ENCODE measurements at regions of chr6 and their contacts with region 1.

Region 1: GRCh38 chr6:25017932-25018567 is 82.3 kb upstream of the RIPOR2 start:
- DNase-seq: peak; percentile 65 to 90 (median 84)
- ATAC-seq: peak; percentile 87
- H3K4me3 ChIP-seq: no peak overlapping the region
- H3K4me3 Mint-ChIP-seq: no peak overlapping the region
- H3K27ac ChIP-seq: peak overlapping the region in 1 of 2 experiments; percentile 59
- H3K27ac Mint-ChIP-seq: peak overlapping the region; percentile 87
- H3K4me1 ChIP-seq: peaks cover 31% of the 10 kb centered on the region
- H3K4me1 Mint-ChIP-seq: peaks cover 38% of the 10 kb centered on the region
- H3K27me3 ChIP-seq: no peaks in the 10 kb centered on the region
- H3K27me3 Mint-ChIP-seq: no peaks in the 10 kb centered on the region
- CTCF ChIP-seq: peak; percentile 89

Region 2: DNA sequence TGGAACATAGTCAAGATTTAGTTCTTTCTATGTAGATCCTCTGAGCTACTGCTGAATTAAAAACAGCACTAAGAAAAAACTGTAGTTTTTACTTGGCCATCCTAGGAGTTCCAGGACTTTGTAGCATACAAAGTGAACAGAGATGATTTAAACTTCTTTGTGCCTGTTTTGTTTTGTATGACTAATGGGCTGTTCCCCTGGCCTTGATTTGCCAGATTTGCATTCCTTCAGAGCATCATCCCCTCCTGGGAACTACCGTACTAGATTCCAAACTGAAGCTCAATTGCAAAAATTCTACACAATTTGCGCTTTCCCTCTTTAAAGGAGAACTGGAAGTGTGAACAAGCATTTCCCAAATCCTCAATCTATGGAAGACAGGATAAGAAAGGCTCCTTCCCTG is 328.1 kb before region 1 on chr6:
- CTCF ChIA-PET with region 1: interaction called, 3 read pairs
- POLR2A ChIA-PET with region 1: no interaction called
- intact Hi-C with region 1: loop called in 1 of 2 experiments (anchors 1 kb)
- DNase-seq: no peak
- ATAC-seq: no peak
- H3K4me3 ChIP-seq: no peak overlapping the region
- H3K4me3 Mint-ChIP-seq: no peak overlapping the region
- H3K27ac ChIP-seq: no peak overlapping the region
- H3K27ac Mint-ChIP-seq: no peak overlapping the region
- H3K4me1 ChIP-seq: peaks cover 10% of the 10 kb centered on the region
- H3K4me1 Mint-ChIP-seq: peaks cover 11% of the 10 kb centered on the region
- H3K27me3 ChIP-seq: no peaks in the 10 kb centered on the region
- H3K27me3 Mint-ChIP-seq: no peaks in the 10 kb centered on the region
- CTCF ChIP-seq: no peak

Region 3: GRCh38 chr6:24774696-24775519 is 243.1 kb before region 1 on chr6 and contains the start of gene GMNN:
- CTCF ChIA-PET with region 1: interaction called, 9 read pairs
- POLR2A ChIA-PET with region 1: interaction called, 4 read pairs
- intact Hi-C with region 1: loop called in 1 of 2 experiments (anchors 2 kb)
- DNase-seq: peak; percentile 93 to 99 (median 98)
- ATAC-seq: peak; percentile 86
- H3K4me3 ChIP-seq: peak within 1 kb of the TSS; percentile 86 to 94
- H3K4me3 Mint-ChIP-seq: peak within 1 kb of the TSS; percentile 99
- H3K27ac ChIP-seq: peak within 1 kb of the TSS; percentile 83 to 85
- H3K27ac Mint-ChIP-seq: peak within 1 kb of the TSS; percentile 97
- H3K4me1 ChIP-seq: peaks cover 14% of the 10 kb centered on the region
- H3K4me1 Mint-ChIP-seq: peaks cover 22% of the 10 kb centered on the region
- H3K27me3 ChIP-seq: no peaks in the 10 kb centered on the region
- H3K27me3 Mint-ChIP-seq: no peaks in the 10 kb centered on the region
- CTCF ChIP-seq: no peak
- total RNA-seq, gene GMNN: 14.1 to 14.4 TPM

Region 4: GRCh38 chr6:24861934-24862333 is 156.1 kb before region 1 on chr6:
- CTCF ChIA-PET with region 1: interaction called, 119 read pairs
- POLR2A ChIA-PET with region 1: interaction called, 15 read pairs
- intact Hi-C with region 1: no loop called
- DNase-seq: no peak
- ATAC-seq: no peak
- H3K4me3 ChIP-seq: peak overlapping the region in 1 of 2 experiments; percentile 2
- H3K4me3 Mint-ChIP-seq: no peak overlapping the region
- H3K27ac ChIP-seq: peak overlapping the region; percentile 11 to 75
- H3K27ac Mint-ChIP-seq: peak overlapping the region; percentile 96
- H3K4me1 ChIP-seq: peaks cover 96% of the 10 kb centered on the region
- H3K4me1 Mint-ChIP-seq: peaks cover 95% of the 10 kb centered on the region
- H3K27me3 ChIP-seq: no peaks in the 10 kb centered on the region
- H3K27me3 Mint-ChIP-seq: no peaks in the 10 kb centered on the region
- CTCF ChIP-seq: no peak

Region 5: GRCh38 chr6:24910961-24911712 is 106.9 kb before region 1 on chr6:
- CTCF ChIA-PET with region 1: interaction called, 31 read pairs
- POLR2A ChIA-PET with region 1: interaction called, 7 read pairs
- intact Hi-C with region 1: no loop called
- DNase-seq: peak in 7 of 9 experiments; percentile 29 to 77 (median 68)
- ATAC-seq: peak; percentile 38
- H3K4me3 ChIP-seq: peak overlapping the region; percentile 57 to 62
- H3K4me3 Mint-ChIP-seq: peak overlapping the region; percentile 94
- H3K27ac ChIP-seq: peak overlapping the region; percentile 62 to 69
- H3K27ac Mint-ChIP-seq: peak overlapping the region; percentile 98
- H3K4me1 ChIP-seq: peaks cover 92% of the 10 kb centered on the region
- H3K4me1 Mint-ChIP-seq: peaks cover 93% of the 10 kb centered on the region
- H3K27me3 ChIP-seq: no peaks in the 10 kb centered on the region
- H3K27me3 Mint-ChIP-seq: no peaks in the 10 kb centered on the region
- CTCF ChIP-seq: no peak

Region 6: DNA sequence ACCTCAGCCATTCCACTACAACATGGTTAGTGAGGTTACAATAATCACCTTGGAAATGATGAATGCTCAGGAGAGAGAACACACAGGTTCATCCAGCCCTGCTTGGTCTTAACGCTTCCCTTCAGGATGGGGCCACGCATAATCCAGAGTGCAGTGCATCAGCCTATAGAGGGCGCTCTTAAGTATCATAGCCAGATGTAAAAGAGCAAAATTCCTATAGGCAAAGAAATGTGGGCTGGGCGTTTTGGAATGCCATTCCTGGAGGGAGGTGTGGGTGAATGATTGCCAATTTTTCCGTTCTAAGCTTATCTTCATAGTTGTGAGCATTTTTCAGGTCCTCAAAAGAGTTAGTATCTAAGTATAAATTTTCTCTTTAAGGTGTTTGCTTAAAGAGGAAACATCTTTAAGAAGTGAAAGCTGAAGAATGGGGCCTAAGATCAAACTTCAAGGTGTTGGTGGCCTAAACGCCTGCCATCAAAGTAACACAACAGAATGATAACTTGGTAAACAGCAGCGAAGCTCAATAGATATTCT is 84.1 kb before region 1 on chr6:
- CTCF ChIA-PET with region 1: interaction called, 85 read pairs
- POLR2A ChIA-PET with region 1: interaction called, 9 read pairs
- intact Hi-C with region 1: no loop called
- DNase-seq: peak in 7 of 9 experiments; percentile 40 to 82 (median 59)
- ATAC-seq: no peak
- H3K4me3 ChIP-seq: peak overlapping the region; percentile 68 to 89
- H3K4me3 Mint-ChIP-seq: peak overlapping the region; percentile 97
- H3K27ac ChIP-seq: peak overlapping the region; percentile 73 to 80
- H3K27ac Mint-ChIP-seq: peak overlapping the region; percentile 95
- H3K4me1 ChIP-seq: peaks cover 49% of the 10 kb centered on the region
- H3K4me1 Mint-ChIP-seq: peaks cover 62% of the 10 kb centered on the region
- H3K27me3 ChIP-seq: no peaks in the 10 kb centered on the region
- H3K27me3 Mint-ChIP-seq: no peaks in the 10 kb centered on the region
- CTCF ChIP-seq: peak; percentile 96

Region 7: GRCh38 chr6:25042036-25042521 is 24.0 kb after region 1 on chr6:
- CTCF ChIA-PET with region 1: interaction called, 34 read pairs
- POLR2A ChIA-PET with region 1: no interaction called
- intact Hi-C with region 1: no loop called
- DNase-seq: peak in 8 of 9 experiments; percentile 20 to 80 (median 59)
- ATAC-seq: peak; percentile 63
- H3K4me3 ChIP-seq: peak overlapping the region; percentile 52 to 82
- H3K4me3 Mint-ChIP-seq: peak overlapping the region; percentile 94
- H3K27ac ChIP-seq: peak overlapping the region; percentile 58 to 90
- H3K27ac Mint-ChIP-seq: peak overlapping the region; percentile 92
- H3K4me1 ChIP-seq: peaks cover 48% of the 10 kb centered on the region
- H3K4me1 Mint-ChIP-seq: peaks cover 60% of the 10 kb centered on the region
- H3K27me3 ChIP-seq: no peaks in the 10 kb centered on the region
- H3K27me3 Mint-ChIP-seq: no peaks in the 10 kb centered on the region
- CTCF ChIP-seq: no peak

Region 8: GRCh38 chr6:25441663-25442270 is 423.7 kb after region 1 on chr6:
- CTCF ChIA-PET with region 1: no interaction called
- POLR2A ChIA-PET with region 1: no interaction called
- intact Hi-C with region 1: no loop called
- DNase-seq: peak in 3 of 9 experiments; percentile 32 to 64 (median 33)
- ATAC-seq: peak; percentile 91
- H3K4me3 ChIP-seq: no peak overlapping the region
- H3K4me3 Mint-ChIP-seq: no peak overlapping the region
- H3K27ac ChIP-seq: peak overlapping the region; percentile 44 to 55
- H3K27ac Mint-ChIP-seq: peak overlapping the region; percentile 93
- H3K4me1 ChIP-seq: peaks cover 24% of the 10 kb centered on the region
- H3K4me1 Mint-ChIP-seq: peaks cover 32% of the 10 kb centered on the region
- H3K27me3 ChIP-seq: no peaks in the 10 kb centered on the region
- H3K27me3 Mint-ChIP-seq: no peaks in the 10 kb centered on the region
- CTCF ChIP-seq: no peak

Region 9: GRCh38 chr6:25835442-25836283 is 817.6 kb after region 1 on chr6:
- CTCF ChIA-PET with region 1: no interaction called
- POLR2A ChIA-PET with region 1: no interaction called
- intact Hi-C with region 1: no loop called
- DNase-seq: no peak
- ATAC-seq: no peak
- H3K4me3 ChIP-seq: no peak overlapping the region
- H3K4me3 Mint-ChIP-seq: no peak overlapping the region
- H3K27ac ChIP-seq: no peak overlapping the region
- H3K27ac Mint-ChIP-seq: no peak overlapping the region
- H3K4me1 ChIP-seq: no peaks in the 10 kb centered on the region
- H3K4me1 Mint-ChIP-seq: no peaks in the 10 kb centered on the region
- H3K27me3 ChIP-seq: no peaks in the 10 kb centered on the region
- H3K27me3 Mint-ChIP-seq: peaks cover 10% of the 10 kb centered on the region
- CTCF ChIP-seq: no peak

Region 10: DNA sequence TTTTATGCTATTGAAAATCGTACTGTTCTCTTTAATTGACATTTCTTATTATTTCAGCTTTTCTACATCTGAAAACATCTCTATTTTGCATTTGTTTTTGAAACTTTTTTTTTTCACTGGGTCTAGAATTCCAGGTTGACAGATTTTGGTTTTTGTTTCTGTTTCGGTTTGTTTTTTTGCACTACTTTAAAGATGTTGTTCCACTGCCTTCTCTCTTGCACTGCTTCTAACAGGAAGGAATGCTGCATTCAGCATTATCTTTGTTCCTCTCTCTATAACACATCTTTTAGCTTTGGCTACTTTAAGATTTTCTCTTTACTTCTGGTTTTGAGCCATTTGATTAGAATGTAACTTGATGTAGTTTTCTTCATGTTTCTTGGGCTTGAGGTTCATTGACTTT is 833.9 kb after region 1 on chr6:
- CTCF ChIA-PET with region 1: no interaction called
- POLR2A ChIA-PET with region 1: no interaction called
- intact Hi-C with region 1: no loop called
- DNase-seq: peak in 1 of 9 experiments; percentile 8
- ATAC-seq: no peak
- H3K4me3 ChIP-seq: no peak overlapping the region
- H3K4me3 Mint-ChIP-seq: no peak overlapping the region
- H3K27ac ChIP-seq: no peak overlapping the region
- H3K27ac Mint-ChIP-seq: no peak overlapping the region
- H3K4me1 ChIP-seq: no peaks in the 10 kb centered on the region
- H3K4me1 Mint-ChIP-seq: peaks cover 5% of the 10 kb centered on the region
- H3K27me3 ChIP-seq: no peaks in the 10 kb centered on the region
- H3K27me3 Mint-ChIP-seq: peaks cover 3% of the 10 kb centered on the region
- CTCF ChIP-seq: no peak

Region 11: GRCh38 chr6:26553635-26554446 is 1535.8 kb after region 1 on chr6:
- CTCF ChIA-PET with region 1: no interaction called
- POLR2A ChIA-PET with region 1: no interaction called
- intact Hi-C with region 1: no loop called
- DNase-seq: peak; percentile 51 to 91 (median 73)
- ATAC-seq: peak; percentile 35
- H3K4me3 ChIP-seq: peak overlapping the region; percentile 64 to 70
- H3K4me3 Mint-ChIP-seq: no peak overlapping the region
- H3K27ac ChIP-seq: peak overlapping the region; percentile 17 to 60
- H3K27ac Mint-ChIP-seq: no peak overlapping the region
- H3K4me1 ChIP-seq: peaks cover 28% of the 10 kb centered on the region
- H3K4me1 Mint-ChIP-seq: peaks cover 21% of the 10 kb centered on the region
- H3K27me3 ChIP-seq: no peaks in the 10 kb centered on the region
- H3K27me3 Mint-ChIP-seq: no peaks in the 10 kb centered on the region
- CTCF ChIP-seq: no peak